ENCODE measurements at regions of chr9 and their contacts with region 1.

Region 1: GRCh38 chr9:114108016-114108833 is 9.1 kb upstream of the KIF12 start:
- DNase-seq: peak; percentile 71 to 87
- ATAC-seq: peak; percentile 98 to 99 (median 98)
- H3K4me3 ChIP-seq: no peak overlapping the region
- H3K27ac ChIP-seq: no peak overlapping the region
- H3K4me1 ChIP-seq: no peaks in the 10 kb centered on the region
- H3K27me3 ChIP-seq: no peaks in the 10 kb centered on the region
- CTCF ChIP-seq: peak; percentile 97

Region 2: DNA sequence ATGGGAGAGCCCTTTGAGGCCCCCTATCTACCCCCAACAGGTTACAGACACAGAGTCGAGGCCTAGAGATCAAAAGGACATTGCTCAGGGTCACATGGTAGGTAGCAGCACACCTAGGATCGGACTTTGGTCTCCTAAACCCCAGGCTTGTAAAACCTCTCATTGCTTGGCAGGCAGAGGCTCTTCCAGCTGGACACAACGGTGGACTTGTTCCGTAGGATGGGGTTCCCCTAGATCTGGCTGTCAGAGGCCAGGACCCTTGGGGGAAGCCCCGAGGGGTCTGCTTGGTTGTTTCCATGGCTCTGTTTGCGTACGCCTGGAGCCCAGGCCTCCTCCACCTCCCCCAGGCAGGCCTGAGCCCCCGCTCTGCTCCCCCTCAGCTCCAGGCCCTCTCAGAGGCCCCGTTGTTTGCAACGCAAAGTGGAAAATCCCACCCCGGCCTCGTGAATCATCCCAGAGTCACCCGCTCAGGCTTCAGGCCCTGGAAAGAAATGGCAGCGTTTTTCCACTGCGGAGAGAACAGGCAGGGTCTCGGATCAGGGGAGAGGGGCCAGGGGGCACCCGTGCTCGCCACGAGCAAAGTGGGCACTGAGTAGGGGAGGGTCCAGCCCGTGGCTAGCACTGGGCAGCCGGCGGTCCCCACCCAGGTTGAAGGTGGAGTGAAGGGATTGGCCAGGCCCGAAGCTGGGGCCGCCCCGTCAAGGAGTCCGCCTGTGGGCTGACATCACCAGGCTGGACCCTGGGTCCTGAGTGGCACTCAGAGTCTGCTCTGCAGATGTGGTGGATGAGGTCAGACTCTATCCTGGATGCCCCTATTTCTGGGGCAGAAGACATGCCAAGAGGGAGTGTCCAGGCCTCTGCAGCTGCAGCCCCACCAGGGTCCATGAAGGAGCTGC is 66.9 kb after region 1 on chr9:
- intact Hi-C with region 1: no loop called
- DNase-seq: peak in 1 of 2 donors; percentile 78
- ATAC-seq: peak; percentile 65 to 87 (median 84)
- H3K4me3 ChIP-seq: no peak overlapping the region
- H3K27ac ChIP-seq: peak overlapping the region; percentile 77
- H3K4me1 ChIP-seq: peaks cover 53% of the 10 kb centered on the region
- H3K27me3 ChIP-seq: no peaks in the 10 kb centered on the region
- CTCF ChIP-seq: no peak

Region 3: GRCh38 chr9:114271641-114272081 is 163.4 kb after region 1 on chr9:
- intact Hi-C with region 1: loop called in 1 of 2 experiments (anchors 5 kb)
- DNase-seq: peak; percentile 42 to 82
- ATAC-seq: peak; percentile 66 to 94 (median 82)
- H3K4me3 ChIP-seq: no peak overlapping the region
- H3K27ac ChIP-seq: no peak overlapping the region
- H3K4me1 ChIP-seq: peaks cover 12% of the 10 kb centered on the region
- H3K27me3 ChIP-seq: no peaks in the 10 kb centered on the region
- CTCF ChIP-seq: peak; percentile 30

Region 4: DNA sequence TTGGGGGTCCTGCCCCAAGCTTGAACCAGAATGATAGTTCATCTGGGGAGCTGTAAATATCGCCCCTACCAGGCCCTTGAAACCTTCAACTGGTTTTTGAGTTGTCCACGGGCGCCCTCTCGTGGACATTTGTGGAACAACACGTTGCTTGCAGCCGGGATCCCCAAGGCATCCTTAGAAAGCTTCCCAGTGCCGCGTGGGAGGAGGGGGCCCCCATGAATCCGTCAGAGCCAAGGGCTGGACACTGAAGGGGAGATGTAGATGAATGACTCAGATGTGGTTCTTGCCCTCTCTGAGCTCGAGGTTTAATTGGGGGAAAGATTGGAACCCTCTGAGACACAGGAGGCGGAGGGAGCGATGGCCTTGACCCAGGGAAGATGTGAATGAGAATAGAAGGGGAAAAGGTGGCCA is 182.8 kb after region 1 on chr9:
- intact Hi-C with region 1: loop called (anchors 1 kb)
- DNase-seq: peak; percentile 71 to 84
- ATAC-seq: peak; percentile 67 to 89 (median 79)
- H3K4me3 ChIP-seq: no peak overlapping the region
- H3K27ac ChIP-seq: no peak overlapping the region
- H3K4me1 ChIP-seq: no peaks in the 10 kb centered on the region
- H3K27me3 ChIP-seq: no peaks in the 10 kb centered on the region
- CTCF ChIP-seq: peak; percentile 95

Measured in psoas muscle (tissue), 8 donors.